Panc1 (cell line): ENCODE measurements at regions of chr3 and their contacts with region 1.

Region 1: GRCh38 chr3:185837414-185837813 is 12.6 kb upstream of the IGF2BP2 start:
- DNase-seq: no peak
- ATAC-seq: peak; percentile 62
- H3K4me3 ChIP-seq: no peak overlapping the region; a peak in 1 of 4 replicates
- H3K27ac ChIP-seq: no peak overlapping the region
- H3K4me1 ChIP-seq: no peaks in the 10 kb centered on the region; the same call in 1 of the 2 replicates
- H3K27me3 ChIP-seq: no peaks in the 10 kb centered on the region
- CTCF ChIP-seq: no peak

Region 2: GRCh38 chr3:185931777-185932612 is 94.6 kb after region 1 on chr3:
- CTCF ChIA-PET with region 1: no interaction called
- POLR2A ChIA-PET with region 1: interaction called, 12 read pairs
- in situ Hi-C with region 1: no loop called
- intact Hi-C with region 1: no loop called
- DNase-seq: no peak
- ATAC-seq: no peak
- H3K4me3 ChIP-seq: peak overlapping the region; percentile 9 to 94; a peak in 3 of 4 replicates
- H3K27ac ChIP-seq: peak overlapping the region; percentile 36; the same call in 1 of the 2 replicates
- H3K4me1 ChIP-seq: peaks cover 72% of the 10 kb centered on the region
- H3K27me3 ChIP-seq: no peaks in the 10 kb centered on the region
- CTCF ChIP-seq: no peak